ENCODE measurements at regions of chr5 and their contacts with region 1.

Region 1: DNA sequence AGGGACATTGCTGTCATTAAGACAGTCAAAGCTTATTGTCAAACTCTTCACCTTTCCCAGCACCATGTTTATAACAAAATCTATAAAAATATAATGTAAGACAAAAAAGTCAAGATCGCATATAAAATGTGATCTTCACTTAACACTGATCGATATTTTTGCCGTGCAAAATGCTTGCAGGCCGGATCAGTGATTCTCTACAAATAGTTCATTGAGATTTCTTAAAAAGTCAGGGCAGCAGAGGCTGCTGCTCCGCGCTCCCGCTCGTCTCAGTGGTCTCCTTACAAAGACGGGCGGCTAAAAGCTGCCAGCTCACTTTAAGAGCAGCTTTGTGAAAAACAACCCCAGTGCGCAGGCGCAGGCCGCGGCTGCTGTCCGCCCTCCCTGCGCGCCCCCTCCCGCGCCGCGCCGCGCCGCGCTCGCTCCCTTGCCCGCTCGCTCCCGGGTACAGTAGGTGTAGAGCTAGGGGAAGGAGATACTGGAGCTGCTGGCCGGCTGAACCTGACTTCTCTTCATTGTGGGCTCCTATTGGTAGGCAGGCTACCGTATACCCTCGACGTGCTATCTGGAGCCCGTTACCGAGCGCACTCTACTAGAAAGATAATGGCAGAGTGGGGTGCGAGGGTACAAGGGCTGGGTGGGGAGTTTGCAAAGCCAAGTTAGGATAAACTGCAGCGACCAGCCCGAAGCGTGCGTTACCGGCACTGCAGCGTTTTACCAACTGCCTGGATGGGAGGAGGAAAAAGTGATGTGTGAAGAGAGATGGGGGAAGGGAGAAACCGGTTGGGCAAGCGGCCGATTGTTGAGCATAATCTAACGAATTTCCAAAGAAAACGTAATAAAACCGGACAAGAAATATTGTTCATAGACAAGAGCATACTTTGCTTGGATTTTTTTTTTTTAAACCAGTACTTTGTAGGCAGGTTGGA is at the start of gene ARRDC3:
- DNase-seq: peak; percentile 87
- H3K4me3 ChIP-seq: peak within 1 kb of the TSS; percentile 89 to 94
- H3K27ac ChIP-seq: peak within 1 kb of the TSS; percentile 100
- H3K4me1 ChIP-seq: peaks cover 1 to 5% of the 10 kb centered on the region in 2 experiments; a peak in 2 of 4 replicates
- H3K27me3 ChIP-seq: no peaks in the 10 kb centered on the region
- CTCF ChIP-seq: no peak
- EP300 ChIP-seq: peak; percentile 9 to 46; a peak in 2 of 4 replicates
- RAD21 ChIP-seq: peak; percentile 1; the same call in 1 of the 2 replicates
- polyA plus RNA-seq, gene ARRDC3: 24.6 and 26.0 TPM in 2 replicates

Region 2: GRCh38 chr5:90866333-90866732 is 517.0 kb before region 1 on chr5:
- CTCF ChIA-PET with region 1: interaction called, 109 read pairs
- POLR2A ChIA-PET with region 1: interaction called, 4 read pairs
- DNase-seq: peak; percentile 48
- H3K4me3 ChIP-seq: no peak overlapping the region; a peak in 1 of 4 replicates
- H3K27ac ChIP-seq: no peak overlapping the region; a peak in 1 of 4 replicates
- H3K4me1 ChIP-seq: peaks cover 0 to 6% of the 10 kb centered on the region in 2 experiments; a peak in 2 of 4 replicates
- H3K27me3 ChIP-seq: no peaks in the 10 kb centered on the region
- CTCF ChIP-seq: peak; percentile 59
- EP300 ChIP-seq: no peak
- RAD21 ChIP-seq: peak; percentile 82

Region 3: GRCh38 chr5:91024727-91025126 is 358.6 kb before region 1 on chr5:
- CTCF ChIA-PET with region 1: interaction called, 10 read pairs
- POLR2A ChIA-PET with region 1: interaction called, 3 read pairs
- DNase-seq: no peak
- H3K4me3 ChIP-seq: no peak overlapping the region
- H3K27ac ChIP-seq: peak overlapping the region in 1 of 2 experiments; percentile 25; a peak in 1 of 4 replicates
- H3K4me1 ChIP-seq: peaks cover 0 to 18% of the 10 kb centered on the region in 2 experiments; a peak in 2 of 4 replicates
- H3K27me3 ChIP-seq: no peaks in the 10 kb centered on the region
- CTCF ChIP-seq: no peak
- EP300 ChIP-seq: no peak
- RAD21 ChIP-seq: no peak

Region 4: GRCh38 chr5:91119981-91120850 is 263.1 kb before region 1 on chr5:
- CTCF ChIA-PET with region 1: interaction called, 22 read pairs
- POLR2A ChIA-PET with region 1: interaction called, 3 read pairs
- DNase-seq: no peak
- H3K4me3 ChIP-seq: no peak overlapping the region
- H3K27ac ChIP-seq: peak overlapping the region in 1 of 2 experiments; percentile 28; a peak in 1 of 4 replicates
- H3K4me1 ChIP-seq: peaks cover 22 to 35% of the 10 kb centered on the region in 2 experiments
- H3K27me3 ChIP-seq: no peaks in the 10 kb centered on the region
- CTCF ChIP-seq: no peak
- EP300 ChIP-seq: no peak
- RAD21 ChIP-seq: no peak

Region 5: DNA sequence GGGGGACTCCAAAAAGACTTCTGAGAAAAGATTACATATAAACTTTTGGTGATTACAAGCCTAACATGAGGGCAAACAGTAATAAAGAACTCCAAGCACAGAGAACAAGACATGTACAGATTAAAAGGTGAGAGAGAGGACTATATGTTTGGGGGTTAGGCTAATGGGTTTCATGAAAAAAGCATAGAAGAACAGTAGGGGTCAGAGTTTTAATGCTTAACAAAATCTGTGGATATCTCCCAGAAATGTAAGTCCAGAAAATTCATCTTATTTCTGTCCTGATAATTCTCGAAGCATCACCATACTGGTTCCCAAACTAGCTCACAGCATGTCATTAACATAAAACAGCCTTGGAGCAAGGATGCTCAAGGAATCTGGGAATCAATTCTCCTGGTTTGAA is 137.4 kb before region 1 on chr5:
- CTCF ChIA-PET with region 1: interaction called, 20 read pairs
- POLR2A ChIA-PET with region 1: interaction called, 3 read pairs
- DNase-seq: no peak
- H3K4me3 ChIP-seq: no peak overlapping the region
- H3K27ac ChIP-seq: no peak overlapping the region
- H3K4me1 ChIP-seq: no peaks in the 10 kb centered on the region
- H3K27me3 ChIP-seq: no peaks in the 10 kb centered on the region
- CTCF ChIP-seq: no peak
- EP300 ChIP-seq: no peak
- RAD21 ChIP-seq: peak; percentile 36; the same call in 1 of the 2 replicates

Region 6: DNA sequence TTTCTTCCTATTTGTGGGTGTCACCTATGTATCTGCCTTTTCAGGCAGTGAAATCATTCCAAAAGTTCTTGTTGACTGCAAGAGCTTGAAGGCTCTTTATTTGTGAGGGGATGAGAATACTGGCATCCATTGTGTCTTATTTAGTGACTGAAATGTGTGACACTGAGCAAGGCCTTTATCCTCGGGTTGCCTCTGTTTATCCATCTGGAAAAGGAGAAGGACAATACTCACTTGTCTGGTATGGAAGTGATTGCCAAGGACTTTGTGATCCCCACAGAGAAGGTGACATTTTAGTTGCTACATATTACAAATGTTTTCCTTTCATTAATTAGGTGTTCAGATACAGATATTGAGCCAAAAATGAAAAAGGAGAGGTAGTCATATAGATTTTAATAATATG is 80.3 kb before region 1 on chr5:
- CTCF ChIA-PET with region 1: no interaction called
- POLR2A ChIA-PET with region 1: no interaction called
- DNase-seq: no peak
- H3K4me3 ChIP-seq: no peak overlapping the region
- H3K27ac ChIP-seq: no peak overlapping the region
- H3K4me1 ChIP-seq: no peaks in the 10 kb centered on the region
- H3K27me3 ChIP-seq: no peaks in the 10 kb centered on the region
- CTCF ChIP-seq: no peak
- EP300 ChIP-seq: no peak
- RAD21 ChIP-seq: no peak

Region 7: DNA sequence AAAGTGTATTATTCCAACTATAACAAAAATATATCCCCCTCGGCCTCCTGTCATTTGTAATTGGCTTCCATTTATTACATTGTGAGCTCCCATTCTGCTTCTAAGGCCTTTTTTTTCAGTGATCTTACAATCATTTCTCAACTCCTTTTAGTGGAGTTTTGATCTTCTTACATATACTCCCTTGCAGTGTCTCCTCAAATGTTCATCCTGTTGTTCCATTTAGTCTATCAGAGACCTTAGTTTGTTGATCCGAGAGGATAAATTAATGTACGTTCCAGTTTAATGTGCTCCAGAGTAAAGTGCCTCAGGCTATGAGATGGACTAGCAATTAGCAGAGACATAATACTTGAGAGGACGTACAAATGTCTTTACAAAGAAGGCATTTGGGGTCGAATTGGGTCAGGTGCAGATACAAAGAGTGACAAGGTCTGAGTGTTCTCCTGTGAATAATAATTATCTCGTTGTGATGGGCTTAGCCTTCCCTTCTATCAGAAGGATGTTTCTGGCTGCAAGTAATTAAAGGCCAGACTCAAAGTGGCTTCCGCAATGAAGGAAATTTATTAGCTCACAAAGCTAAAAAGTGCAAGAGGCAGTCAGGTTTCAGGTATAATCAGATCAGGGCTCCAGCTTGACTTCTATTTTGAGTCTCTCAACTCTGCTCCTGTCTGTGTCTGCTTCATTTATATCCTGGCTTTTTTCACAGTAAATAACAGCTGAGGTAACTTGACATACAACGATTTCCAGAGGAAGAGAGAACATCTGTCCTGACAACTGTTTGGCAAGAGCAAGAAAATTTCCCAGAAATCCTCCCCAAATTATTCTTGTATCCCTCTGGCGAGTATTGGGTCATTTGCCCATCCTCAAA is 30.2 kb before region 1 on chr5:
- CTCF ChIA-PET with region 1: interaction called, 6 read pairs
- POLR2A ChIA-PET with region 1: interaction called, 14 read pairs
- DNase-seq: peak; percentile 50
- H3K4me3 ChIP-seq: no peak overlapping the region
- H3K27ac ChIP-seq: peak overlapping the region in 1 of 2 experiments; percentile 97; a peak in 2 of 4 replicates
- H3K4me1 ChIP-seq: peaks cover 0 to 29% of the 10 kb centered on the region in 2 experiments; a peak in 1 of 4 replicates
- H3K27me3 ChIP-seq: no peaks in the 10 kb centered on the region
- CTCF ChIP-seq: no peak
- EP300 ChIP-seq: peak in 1 of 2 experiments; percentile 96; a peak in 2 of 4 replicates
- RAD21 ChIP-seq: peak; percentile 0

Region 8: DNA sequence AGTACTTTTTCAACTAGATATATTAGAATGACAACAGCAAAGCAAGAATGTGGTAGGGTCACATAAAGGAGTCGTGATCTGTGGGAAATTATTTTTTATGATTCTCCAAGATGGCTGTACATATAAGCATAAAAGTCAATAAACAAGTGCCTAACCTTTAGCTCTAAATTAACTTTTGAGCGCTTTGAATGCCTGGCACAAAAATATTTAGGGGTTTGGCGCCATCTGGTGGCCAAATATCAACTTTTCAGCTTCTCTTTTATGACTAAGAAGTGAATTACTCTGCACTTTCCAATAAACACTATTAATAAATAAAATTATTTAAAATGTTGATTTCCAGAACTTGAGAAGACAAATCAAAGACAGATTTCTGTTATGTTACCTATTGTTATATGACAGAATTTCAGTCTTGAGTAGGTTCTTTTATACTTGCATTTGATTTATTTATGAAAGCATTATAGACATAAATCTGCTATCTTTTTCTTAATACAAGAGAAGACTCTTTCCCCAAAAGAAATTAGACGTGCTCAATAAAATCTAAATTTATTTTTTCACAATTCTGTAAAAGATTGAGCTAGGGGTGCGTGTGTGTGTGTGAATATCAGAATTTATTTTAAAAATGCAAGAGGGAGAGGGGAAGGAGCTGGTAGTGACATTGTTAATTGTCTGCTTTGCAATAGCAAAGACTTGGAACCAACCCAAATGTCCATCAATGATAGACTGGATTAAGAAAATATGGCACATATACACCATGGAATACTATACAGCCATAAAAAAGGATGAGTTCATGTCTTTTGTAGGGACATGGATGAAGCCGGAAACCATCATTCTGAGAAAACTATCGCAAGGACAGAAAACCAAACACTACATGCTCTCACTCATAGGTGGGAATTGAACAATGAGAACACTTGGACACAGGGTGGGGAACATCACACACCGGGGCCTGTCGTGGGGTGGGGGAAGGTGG is 36.6 kb after region 1 on chr5:
- CTCF ChIA-PET with region 1: interaction called, 91 read pairs
- POLR2A ChIA-PET with region 1: interaction called, 4 read pairs
- DNase-seq: peak; percentile 5
- H3K4me3 ChIP-seq: no peak overlapping the region; a peak in 1 of 4 replicates
- H3K27ac ChIP-seq: no peak overlapping the region
- H3K4me1 ChIP-seq: no peaks in the 10 kb centered on the region; a peak in 2 of 4 replicates
- H3K27me3 ChIP-seq: no peaks in the 10 kb centered on the region
- CTCF ChIP-seq: peak; percentile 81
- EP300 ChIP-seq: no peak
- RAD21 ChIP-seq: peak; percentile 84